ENCODE measurements at regions of chr6 and their contacts with region 1.

Region 1: GRCh38 chr6:26216356-26216885 is 129.2 kb downstream of the HFE start:
- DNase-seq: peak in 1 of 2 donors; percentile 89
- H3K4me3 ChIP-seq: peak overlapping the region; percentile 55 to 64
- H3K27ac ChIP-seq: peak overlapping the region; percentile 90
- H3K4me1 ChIP-seq: peaks cover 0 to 11% of the 10 kb centered on the region in 2 donors
- H3K27me3 ChIP-seq: no peaks in the 10 kb centered on the region
- CTCF ChIP-seq: no peak

Region 2: GRCh38 chr6:26196846-26197648 is 19.4 kb before region 1 on chr6:
- intact Hi-C with region 1: loop called (anchors 2 kb)
- DNase-seq: peak; percentile 64 to 91
- H3K4me3 ChIP-seq: peak overlapping the region; percentile 62 to 86
- H3K27ac ChIP-seq: peak overlapping the region; percentile 92 to 95
- H3K4me1 ChIP-seq: peaks cover 4 to 13% of the 10 kb centered on the region in 2 donors
- H3K27me3 ChIP-seq: no peaks in the 10 kb centered on the region
- CTCF ChIP-seq: no peak

Region 3: GRCh38 chr6:26204332-26205165 is 11.9 kb before region 1 on chr6:
- intact Hi-C with region 1: loop called (anchors 1 kb)
- DNase-seq: peak; percentile 88 to 97
- H3K4me3 ChIP-seq: peak overlapping the region; percentile 66 to 73
- H3K27ac ChIP-seq: peak overlapping the region; percentile 91 to 97
- H3K4me1 ChIP-seq: peaks cover 0 to 4% of the 10 kb centered on the region in 2 donors
- H3K27me3 ChIP-seq: no peaks in the 10 kb centered on the region
- CTCF ChIP-seq: peak; percentile 30 to 38 (median 35)

Region 4: GRCh38 chr6:26234421-26235296 is 18.2 kb after region 1 on chr6:
- intact Hi-C with region 1: loop called (anchors 2 kb)
- DNase-seq: peak in 1 of 2 donors; percentile 77
- H3K4me3 ChIP-seq: peak overlapping the region; percentile 61 to 79
- H3K27ac ChIP-seq: peak overlapping the region; percentile 84 to 86
- H3K4me1 ChIP-seq: peaks cover 0 to 7% of the 10 kb centered on the region in 2 donors
- H3K27me3 ChIP-seq: no peaks in the 10 kb centered on the region
- CTCF ChIP-seq: no peak

Region 5: DNA sequence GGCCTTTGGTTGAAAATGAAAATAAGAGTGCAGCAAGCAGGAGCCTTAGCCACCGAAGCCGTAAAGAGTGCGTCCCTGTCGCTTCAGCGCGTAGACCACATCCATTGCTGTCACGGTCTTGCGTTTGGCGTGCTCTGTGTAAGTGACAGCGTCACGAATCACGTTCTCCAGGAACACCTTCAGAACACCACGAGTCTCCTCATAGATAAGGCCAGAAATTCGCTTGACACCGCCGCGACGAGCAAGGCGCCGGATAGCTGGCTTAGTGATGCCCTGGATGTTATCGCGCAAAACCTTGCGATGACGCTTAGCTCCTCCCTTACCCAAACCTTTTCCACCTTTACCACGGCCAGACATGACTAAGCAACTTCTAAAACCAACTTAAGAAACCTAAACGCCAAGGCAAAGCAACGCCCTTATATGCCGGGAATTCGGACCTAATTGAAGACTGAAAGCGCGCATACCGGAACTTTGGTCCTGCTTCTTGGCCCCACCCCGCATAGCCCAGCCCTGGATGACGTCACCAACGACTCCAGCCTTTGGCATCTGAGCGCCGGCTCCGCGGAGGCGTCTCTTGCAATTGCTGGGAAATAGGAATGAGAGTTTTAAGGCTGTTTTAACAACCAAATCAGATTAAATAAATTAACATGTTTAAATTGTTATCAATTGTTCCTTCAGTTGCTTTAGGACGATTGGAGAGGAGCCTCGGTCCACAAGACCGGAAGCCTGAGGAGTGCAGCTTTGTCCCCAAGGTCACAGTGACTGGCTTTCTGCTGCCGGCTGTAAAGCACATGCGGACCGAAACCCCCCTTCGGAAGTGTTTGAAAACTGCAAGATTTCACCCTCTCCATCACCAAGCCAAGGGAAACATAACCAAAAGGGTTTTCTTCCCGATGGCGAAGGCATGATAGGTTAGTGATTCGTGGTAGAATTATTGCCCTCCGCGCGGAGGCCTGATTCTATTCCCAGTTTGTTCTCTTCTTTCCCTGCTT is 69.0 kb after region 1 on chr6:
- intact Hi-C with region 1: loop called (anchors 2 kb)
- DNase-seq: peak; percentile 92 to 99
- H3K4me3 ChIP-seq: peak overlapping the region; percentile 71 to 79
- H3K27ac ChIP-seq: peak overlapping the region; percentile 93 to 97
- H3K4me1 ChIP-seq: no peaks in the 10 kb centered on the region
- H3K27me3 ChIP-seq: no peaks in the 10 kb centered on the region
- CTCF ChIP-seq: no peak